ENCODE measurements at regions of chr10 and their contacts with region 1.

Region 1: GRCh38 chr10:99430451-99431189 is at the start of gene GOT1:
- DNase-seq: peak; percentile 100
- ATAC-seq: peak; percentile 92
- H3K4me3 ChIP-seq: peak within 1 kb of the TSS; percentile 72 to 84
- H3K27ac ChIP-seq: peak within 1 kb of the TSS; percentile 81
- H3K4me1 ChIP-seq: peaks cover 7 to 22% of the 10 kb centered on the region in 2 experiments; a peak in 3 of 4 replicates
- H3K27me3 ChIP-seq: no peaks in the 10 kb centered on the region
- CTCF ChIP-seq: no peak
- POLR2A ChIP-seq: peak; percentile 80
- RAD21 ChIP-seq: no peak
- total RNA-seq, gene GOT1: 135 TPM

Region 2: DNA sequence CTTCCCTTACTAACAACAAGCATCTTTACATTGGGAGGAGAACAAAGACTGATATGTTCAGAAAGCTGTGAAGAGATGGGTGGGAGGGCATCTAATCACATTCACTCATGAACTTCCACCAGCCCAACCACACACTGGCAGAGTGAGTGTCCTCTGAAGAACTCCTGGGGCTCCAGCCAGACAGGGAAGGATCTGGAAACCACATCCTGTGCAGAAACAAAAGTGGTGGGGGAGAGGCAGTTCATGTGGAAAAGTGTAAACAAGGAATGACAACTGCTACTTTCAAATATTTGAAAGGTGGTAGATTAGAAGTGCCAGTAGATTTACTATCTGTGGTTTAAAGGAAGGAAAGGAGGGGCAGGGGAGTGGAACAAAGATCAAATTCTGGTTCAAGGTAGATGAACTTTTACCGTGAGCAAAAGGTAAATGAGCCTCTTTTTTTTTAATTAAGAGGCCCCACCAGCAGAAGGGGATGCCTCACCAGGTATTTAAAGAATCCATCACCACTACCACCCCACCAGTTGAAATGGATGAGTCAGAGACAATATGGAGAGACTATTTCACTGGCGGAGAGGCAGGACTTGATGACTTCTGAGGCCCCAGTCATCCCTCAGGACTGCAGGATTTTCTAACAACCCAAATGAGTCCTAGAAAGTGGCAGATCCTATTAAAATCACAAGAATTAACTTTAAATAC is 34.7 kb before region 1 on chr10:
- CTCF ChIA-PET with region 1: interaction called, 10 read pairs
- POLR2A ChIA-PET with region 1: interaction called, 4 read pairs
- RAD21 ChIA-PET with region 1: no interaction called
- intact Hi-C with region 1: loop called (anchors 2 kb)
- DNase-seq: no peak
- ATAC-seq: peak; percentile 41; the same call in 1 of the 2 replicates
- H3K4me3 ChIP-seq: no peak overlapping the region
- H3K27ac ChIP-seq: peak overlapping the region; percentile 26; the same call in 1 of the 2 replicates
- H3K4me1 ChIP-seq: peaks cover 15 to 31% of the 10 kb centered on the region in 2 experiments; a peak in 3 of 4 replicates
- H3K27me3 ChIP-seq: no peaks in the 10 kb centered on the region
- CTCF ChIP-seq: no peak
- POLR2A ChIP-seq: no peak
- RAD21 ChIP-seq: no peak

Region 3: GRCh38 chr10:99418910-99419624 is 11.6 kb before region 1 on chr10:
- CTCF ChIA-PET with region 1: interaction called, 4 read pairs
- POLR2A ChIA-PET with region 1: interaction called, 10 read pairs
- RAD21 ChIA-PET with region 1: no interaction called
- intact Hi-C with region 1: no loop called
- DNase-seq: no peak
- ATAC-seq: no peak
- H3K4me3 ChIP-seq: no peak overlapping the region
- H3K27ac ChIP-seq: no peak overlapping the region
- H3K4me1 ChIP-seq: no peaks in the 10 kb centered on the region
- H3K27me3 ChIP-seq: no peaks in the 10 kb centered on the region
- CTCF ChIP-seq: no peak
- POLR2A ChIP-seq: no peak
- RAD21 ChIP-seq: no peak

Region 4: DNA sequence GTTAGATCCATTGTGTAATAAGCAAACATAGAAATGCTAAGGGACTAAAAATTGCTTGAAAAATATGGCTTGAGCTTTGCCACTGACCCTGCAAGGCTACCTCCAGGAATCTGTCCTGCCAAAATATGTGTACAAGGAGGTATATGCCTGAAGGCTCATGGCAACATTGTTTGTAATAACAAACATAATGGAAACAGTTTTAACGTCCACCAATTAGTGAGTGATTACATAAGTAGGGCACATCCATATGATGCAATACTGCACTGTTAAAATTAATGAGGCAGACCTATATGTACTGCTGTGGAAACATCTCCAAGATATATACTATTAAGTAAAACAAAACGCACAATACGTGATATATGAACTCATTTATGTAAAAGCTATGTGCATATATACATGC is 12.9 kb after region 1 on chr10:
- CTCF ChIA-PET with region 1: interaction called, 15 read pairs
- POLR2A ChIA-PET with region 1: interaction called, 13 read pairs
- RAD21 ChIA-PET with region 1: no interaction called
- intact Hi-C with region 1: no loop called
- DNase-seq: no peak
- ATAC-seq: no peak
- H3K4me3 ChIP-seq: no peak overlapping the region
- H3K27ac ChIP-seq: no peak overlapping the region
- H3K4me1 ChIP-seq: no peaks in the 10 kb centered on the region
- H3K27me3 ChIP-seq: peaks cover 9% of the 10 kb centered on the region; the same call in 1 of the 2 replicates
- CTCF ChIP-seq: no peak
- POLR2A ChIP-seq: no peak
- RAD21 ChIP-seq: no peak

Region 5: GRCh38 chr10:99450624-99451498 is 20.2 kb after region 1 on chr10:
- CTCF ChIA-PET with region 1: interaction called, 22 read pairs
- POLR2A ChIA-PET with region 1: interaction called, 13 read pairs
- RAD21 ChIA-PET with region 1: no interaction called
- intact Hi-C with region 1: no loop called
- DNase-seq: no peak
- ATAC-seq: no peak
- H3K4me3 ChIP-seq: no peak overlapping the region
- H3K27ac ChIP-seq: no peak overlapping the region
- H3K4me1 ChIP-seq: no peaks in the 10 kb centered on the region
- H3K27me3 ChIP-seq: peaks cover 80% of the 10 kb centered on the region
- CTCF ChIP-seq: no peak
- POLR2A ChIP-seq: no peak
- RAD21 ChIP-seq: no peak

Region 6: GRCh38 chr10:99620713-99621453 is 190.3 kb after region 1 on chr10:
- CTCF ChIA-PET with region 1: interaction called, 46 read pairs
- POLR2A ChIA-PET with region 1: interaction called, 23 read pairs
- RAD21 ChIA-PET with region 1: no interaction called
- intact Hi-C with region 1: no loop called
- DNase-seq: peak; percentile 89
- ATAC-seq: peak; percentile 90
- H3K4me3 ChIP-seq: peak overlapping the region; percentile 63 to 73
- H3K27ac ChIP-seq: peak overlapping the region; percentile 96
- H3K4me1 ChIP-seq: peaks cover 17 to 34% of the 10 kb centered on the region in 2 experiments
- H3K27me3 ChIP-seq: no peaks in the 10 kb centered on the region
- CTCF ChIP-seq: peak in 1 of 3 experiments; percentile 7; a peak in 1 of 6 replicates
- POLR2A ChIP-seq: peak; percentile 56
- RAD21 ChIP-seq: no peak

Region 7: DNA sequence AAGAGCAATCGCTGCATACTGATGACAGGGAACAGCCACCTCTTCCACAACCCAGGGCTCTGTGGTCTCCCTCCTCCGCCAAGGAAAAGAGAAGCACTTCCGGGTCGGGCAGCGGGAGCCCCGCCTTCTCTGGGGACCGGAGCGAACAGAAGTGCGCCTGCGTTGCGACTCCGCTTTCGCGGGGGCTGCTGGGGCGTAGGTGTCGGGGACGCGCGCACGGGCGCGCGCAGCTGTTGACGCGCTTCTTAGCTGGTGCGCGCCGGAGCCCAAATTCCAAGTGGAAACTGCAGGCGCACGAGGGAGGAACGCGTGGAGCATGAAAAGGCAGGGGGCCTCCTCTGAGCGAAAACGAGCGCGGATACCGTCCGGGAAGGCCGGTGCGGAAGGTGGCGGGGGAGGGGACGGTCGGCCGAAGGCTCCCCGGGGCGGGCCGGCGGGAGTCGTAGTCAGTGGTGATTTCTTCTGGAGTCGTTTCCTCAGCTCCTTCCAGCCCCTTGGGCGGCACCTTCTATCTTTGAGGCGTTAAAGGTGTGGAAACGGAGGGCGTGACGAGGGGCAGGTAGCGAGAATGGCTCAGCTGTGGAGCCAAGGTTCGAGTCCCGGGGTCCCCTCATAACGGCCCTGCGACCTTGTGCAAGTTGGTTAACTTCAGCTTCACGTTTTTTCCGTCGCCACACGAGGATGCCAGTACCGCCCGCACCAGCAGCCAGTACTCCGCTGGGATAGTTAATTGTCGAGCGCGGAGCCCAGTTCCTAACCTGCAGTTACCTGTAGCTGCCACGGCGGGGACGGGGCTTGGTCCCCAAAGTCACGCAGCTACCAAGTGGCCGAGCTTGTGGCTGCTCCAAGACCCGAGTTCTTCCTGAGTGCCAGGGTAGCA is 301.7 kb after region 1 on chr10 and contains the starts of genes COX15 and CUTC:
- CTCF ChIA-PET with region 1: no interaction called
- POLR2A ChIA-PET with region 1: interaction called, 14 read pairs
- RAD21 ChIA-PET with region 1: no interaction called
- intact Hi-C with region 1: loop called (anchors 5 kb)
- DNase-seq: peak; percentile 97
- ATAC-seq: peak; percentile 88
- H3K4me3 ChIP-seq: peak within 1 kb of the TSS; percentile 80 to 94
- H3K27ac ChIP-seq: peak within 1 kb of the TSS; percentile 99
- H3K4me1 ChIP-seq: peaks cover 15 to 16% of the 10 kb centered on the region in 2 experiments; a peak in 3 of 4 replicates
- H3K27me3 ChIP-seq: no peaks in the 10 kb centered on the region
- CTCF ChIP-seq: peak in 2 of 3 experiments; percentile 60 to 72; a peak in 5 of 6 replicates
- POLR2A ChIP-seq: peak; percentile 95
- RAD21 ChIP-seq: peak; percentile 62
- total RNA-seq, gene COX15: 79.6 TPM
- total RNA-seq, gene CUTC: 53.6 TPM

Measured in HCT116 (cell line).